K562 (cell line): ENCODE measurements at regions of chr22 and their contacts with region 1.

Region 1: DNA sequence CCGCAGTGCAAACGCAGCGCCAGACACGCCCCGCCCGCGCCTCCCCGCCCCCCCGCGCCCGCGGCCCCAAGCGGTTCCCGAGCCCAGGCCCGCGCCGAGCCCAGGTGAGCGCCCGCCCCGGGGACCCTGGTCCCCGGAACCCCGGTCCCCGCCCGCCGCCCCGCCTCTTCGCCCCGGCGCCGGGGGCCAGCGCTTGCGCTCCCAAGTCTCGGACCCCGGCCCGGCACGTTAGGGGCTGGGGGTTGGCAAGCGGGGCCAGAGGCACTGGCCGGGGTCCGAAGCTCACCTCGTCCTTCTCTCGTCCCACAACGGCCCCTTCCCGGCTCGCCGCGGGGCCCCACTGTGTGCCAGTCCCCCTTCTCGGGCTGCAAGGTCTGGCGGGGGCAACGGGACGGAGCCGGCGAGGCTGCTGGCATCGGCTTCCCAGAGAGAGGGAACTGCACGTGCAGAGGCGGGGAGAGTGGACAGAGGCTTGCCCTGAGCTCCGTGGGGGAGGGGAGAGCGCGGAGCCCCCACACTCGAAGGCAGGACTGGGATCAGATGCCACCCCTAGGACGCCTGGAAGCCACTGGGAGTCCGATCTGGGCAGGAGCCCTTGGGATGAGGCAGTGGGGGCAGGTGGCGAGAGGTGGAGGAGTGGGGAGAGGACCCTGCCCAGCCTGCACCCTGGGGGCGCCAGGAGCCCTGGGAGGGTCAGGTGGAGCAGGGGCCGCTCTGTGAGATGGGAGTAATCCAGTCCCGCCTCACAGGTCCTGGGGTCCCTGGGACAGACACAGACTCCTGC is 1.8 kb upstream of the AIFM3 start:
- DNase-seq: peak in 3 of 4 experiments; percentile 65 to 97 (median 97)
- ATAC-seq: no peak
- H3K4me3 ChIP-seq: no peak overlapping the region
- H3K27ac ChIP-seq: no peak overlapping the region
- H3K4me1 ChIP-seq: peaks cover 0 to 40% of the 10 kb centered on the region in 2 experiments; a peak in 3 of 5 replicates
- H3K27me3 ChIP-seq: peaks cover 11 to 38% of the 10 kb centered on the region in 2 experiments; a peak in 4 of 5 replicates
- CTCF ChIP-seq: no peak
- EP300 ChIP-seq: no peak
- POLR2A ChIP-seq: no peak
- RAD21 ChIP-seq: no peak

Region 2: GRCh38 chr22:20803696-20804324 is 161.5 kb before region 1 on chr22:
- CTCF ChIA-PET with region 1: no interaction called
- POLR2A ChIA-PET with region 1: interaction called, 3 read pairs
- in situ Hi-C with region 1: no loop called
- intact Hi-C with region 1: loop called (anchors 1 kb)
- DNase-seq: peak; percentile 78 to 84 (median 84)
- ATAC-seq: peak; percentile 89
- H3K4me3 ChIP-seq: no peak overlapping the region
- H3K27ac ChIP-seq: no peak overlapping the region
- H3K4me1 ChIP-seq: peaks cover 3 to 13% of the 10 kb centered on the region in 2 experiments; a peak in 3 of 5 replicates
- H3K27me3 ChIP-seq: no peaks in the 10 kb centered on the region
- CTCF ChIP-seq: peak; percentile 94 to 100 (median 98)
- EP300 ChIP-seq: no peak
- POLR2A ChIP-seq: no peak
- RAD21 ChIP-seq: peak; percentile 95 to 99

Region 3: DNA sequence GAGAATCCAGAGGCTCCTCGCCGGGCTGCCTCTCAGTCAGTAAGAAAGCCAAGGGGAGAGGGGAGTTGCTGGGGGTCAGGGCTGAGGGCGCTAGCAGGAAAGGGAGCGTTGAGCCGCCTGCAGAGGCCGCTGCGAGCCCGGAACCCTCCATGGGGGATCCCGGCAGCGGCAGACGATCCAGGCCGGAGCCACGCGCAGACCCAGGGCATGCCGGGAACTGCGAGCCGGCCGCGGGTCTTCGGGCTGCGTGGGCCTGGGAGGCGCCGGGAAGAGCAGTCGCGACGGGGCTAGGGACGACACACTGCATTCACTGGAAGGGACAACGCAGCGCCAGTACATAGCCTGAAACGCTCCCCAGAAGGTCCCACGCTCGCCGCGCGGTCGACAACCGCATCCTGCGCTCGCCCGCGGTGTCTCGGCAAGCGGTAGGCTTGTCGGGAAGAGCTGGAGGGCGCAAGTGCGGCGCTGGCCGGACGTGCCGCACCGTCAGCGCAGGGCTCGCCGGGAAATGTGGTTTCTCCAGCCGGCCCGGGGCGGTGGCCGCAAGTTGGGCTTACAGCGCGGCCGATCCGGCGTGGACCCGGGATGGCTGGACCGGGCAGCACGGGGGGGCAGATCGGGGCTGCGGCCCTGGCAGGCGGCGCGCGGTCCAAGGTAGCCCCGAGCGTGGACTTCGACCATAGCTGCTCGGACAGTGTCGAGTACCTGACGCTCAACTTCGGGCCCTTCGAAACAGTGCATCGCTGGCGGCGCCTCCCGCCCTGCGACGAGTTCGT is 16.7 kb after region 1 on chr22 and contains the start of gene LZTR1:
- CTCF ChIA-PET with region 1: no interaction called
- POLR2A ChIA-PET with region 1: interaction called, 451 read pairs
- in situ Hi-C with region 1: no loop called
- intact Hi-C with region 1: no loop called
- DNase-seq: peak; percentile 99 to 100 (median 100)
- ATAC-seq: peak; percentile 96
- H3K4me3 ChIP-seq: peak within 1 kb of the TSS; percentile 54
- H3K27ac ChIP-seq: peak within 1 kb of the TSS; percentile 86
- H3K4me1 ChIP-seq: peaks cover 19 to 48% of the 10 kb centered on the region in 2 experiments
- H3K27me3 ChIP-seq: peaks cover 3 to 9% of the 10 kb centered on the region in 2 experiments; a peak in 3 of 5 replicates
- CTCF ChIP-seq: peak; percentile 99 to 100 (median 99)
- EP300 ChIP-seq: no peak
- POLR2A ChIP-seq: no peak
- RAD21 ChIP-seq: peak; percentile 97
- polyA plus RNA-seq, gene LZTR1: 2.2 to 3.1 TPM

Region 4: GRCh38 chr22:21009638-21010425 is 44.5 kb after region 1 on chr22:
- CTCF ChIA-PET with region 1: no interaction called
- POLR2A ChIA-PET with region 1: no interaction called
- in situ Hi-C with region 1: no loop called
- intact Hi-C with region 1: no loop called
- DNase-seq: peak; percentile 85 to 87 (median 86)
- ATAC-seq: peak; percentile 16
- H3K4me3 ChIP-seq: no peak overlapping the region
- H3K27ac ChIP-seq: no peak overlapping the region
- H3K4me1 ChIP-seq: peaks cover 17 to 27% of the 10 kb centered on the region in 2 experiments
- H3K27me3 ChIP-seq: no peaks in the 10 kb centered on the region
- CTCF ChIP-seq: no peak
- EP300 ChIP-seq: no peak
- POLR2A ChIP-seq: no peak
- RAD21 ChIP-seq: no peak; a peak in 1 of 4 replicates

Region 5: GRCh38 chr22:21045585-21046294 is 80.4 kb after region 1 on chr22 and contains the start of gene LRRC74B:
- CTCF ChIA-PET with region 1: no interaction called
- POLR2A ChIA-PET with region 1: interaction called, 3 read pairs
- in situ Hi-C with region 1: no loop called
- intact Hi-C with region 1: loop called (anchors 5 kb)
- DNase-seq: peak; percentile 99 to 100 (median 100)
- ATAC-seq: peak; percentile 99
- H3K4me3 ChIP-seq: peak within 1 kb of the TSS; percentile 5; the same call in 1 of the 2 replicates
- H3K27ac ChIP-seq: no peak within 1 kb of the TSS
- H3K4me1 ChIP-seq: peaks cover 19 to 33% of the 10 kb centered on the region in 2 experiments
- H3K27me3 ChIP-seq: peaks cover 25 to 59% of the 10 kb centered on the region in 2 experiments; a peak in 4 of 5 replicates
- CTCF ChIP-seq: no peak
- EP300 ChIP-seq: no peak
- POLR2A ChIP-seq: no peak
- RAD21 ChIP-seq: no peak; a peak in 1 of 4 replicates
- polyA plus RNA-seq, gene LRRC74B: not detected